Activated naive CD4-positive, alpha-beta T cell treated with anti-CD3 and anti-CD28 coated beads for 36 hours (primary cell): ENCODE measurements at regions of chr1 and their contacts with region 1.

Region 1: GRCh38 chr1:243343970-243344937 is 88.4 kb downstream of the SDCCAG8 start:
- DNase-seq: no peak
- H3K4me3 Mint-ChIP-seq: no peak overlapping the region
- H3K27ac Mint-ChIP-seq: no peak overlapping the region
- H3K4me1 Mint-ChIP-seq: peaks cover 2% of the 10 kb centered on the region
- H3K27me3 Mint-ChIP-seq: no peaks in the 10 kb centered on the region

Region 2: GRCh38 chr1:243413431-243414151 is 69.3 kb after region 1 on chr1:
- CTCF ChIA-PET with region 1: interaction called, 4 read pairs
- intact Hi-C with region 1: loop called (anchors 2 kb)
- DNase-seq: peak; percentile 8
- H3K4me3 Mint-ChIP-seq: no peak overlapping the region
- H3K27ac Mint-ChIP-seq: no peak overlapping the region
- H3K4me1 Mint-ChIP-seq: peaks cover 23% of the 10 kb centered on the region
- H3K27me3 Mint-ChIP-seq: no peaks in the 10 kb centered on the region

Region 3: GRCh38 chr1:243748706-243749283 is 404.5 kb after region 1 on chr1:
- CTCF ChIA-PET with region 1: interaction called, 14 read pairs
- intact Hi-C with region 1: loop called (anchors 1 kb)
- DNase-seq: no peak
- H3K4me3 Mint-ChIP-seq: no peak overlapping the region
- H3K27ac Mint-ChIP-seq: no peak overlapping the region
- H3K4me1 Mint-ChIP-seq: peaks cover 25% of the 10 kb centered on the region
- H3K27me3 Mint-ChIP-seq: no peaks in the 10 kb centered on the region

Region 4: DNA sequence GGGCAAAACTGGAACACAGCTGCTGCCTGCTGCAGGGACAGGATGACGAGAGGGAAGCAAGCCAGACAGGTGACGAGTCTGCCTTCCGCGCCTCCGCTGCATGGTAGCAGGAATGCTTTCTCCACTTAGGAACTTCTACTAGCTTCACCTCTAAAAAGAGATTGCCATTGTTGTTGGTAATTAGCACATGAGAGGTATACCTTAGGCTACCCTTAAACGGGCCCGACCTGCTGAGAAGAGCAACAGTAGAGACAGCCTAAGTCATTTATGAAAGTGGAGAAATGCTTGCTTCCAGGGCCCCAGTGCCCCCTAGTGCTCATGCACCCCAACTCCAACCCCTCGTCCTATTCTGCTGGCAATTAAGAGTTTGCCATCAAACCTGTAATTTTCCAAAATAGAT is 602.7 kb after region 1 on chr1:
- CTCF ChIA-PET with region 1: interaction called, 3 read pairs
- intact Hi-C with region 1: loop called (anchors 1 kb)
- DNase-seq: peak; percentile 59
- H3K4me3 Mint-ChIP-seq: no peak overlapping the region
- H3K27ac Mint-ChIP-seq: no peak overlapping the region
- H3K4me1 Mint-ChIP-seq: no peaks in the 10 kb centered on the region
- H3K27me3 Mint-ChIP-seq: no peaks in the 10 kb centered on the region

Region 5: DNA sequence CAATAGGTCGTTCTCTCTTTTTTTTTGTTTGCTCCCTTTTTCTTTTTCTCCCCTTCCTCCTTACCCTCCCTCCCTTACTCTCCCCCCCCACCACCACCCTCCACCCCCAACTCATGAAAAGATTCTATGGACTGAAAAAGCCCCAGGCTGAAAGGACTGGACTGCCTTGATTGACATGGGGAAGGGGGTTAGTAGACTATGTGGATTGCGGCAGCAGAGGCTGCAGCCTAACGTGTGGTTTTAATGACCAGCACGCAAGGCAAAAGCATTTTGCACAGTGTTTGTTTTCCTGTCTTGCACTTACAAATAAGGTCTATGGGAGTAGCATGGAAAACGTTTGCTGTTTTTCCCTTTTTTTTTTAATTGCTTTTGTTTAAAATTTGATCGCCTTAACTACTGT is 712.3 kb after region 1 on chr1:
- CTCF ChIA-PET with region 1: no interaction called
- intact Hi-C with region 1: loop called (anchors 2 kb)
- DNase-seq: no peak
- H3K4me3 Mint-ChIP-seq: no peak overlapping the region
- H3K27ac Mint-ChIP-seq: no peak overlapping the region
- H3K4me1 Mint-ChIP-seq: peaks cover 10% of the 10 kb centered on the region
- H3K27me3 Mint-ChIP-seq: no peaks in the 10 kb centered on the region

Region 6: GRCh38 chr1:244302889-244303613 is 958.8 kb after region 1 on chr1:
- CTCF ChIA-PET with region 1: interaction called, 3 read pairs
- intact Hi-C with region 1: loop called (anchors 1 kb)
- DNase-seq: no peak
- H3K4me3 Mint-ChIP-seq: no peak overlapping the region
- H3K27ac Mint-ChIP-seq: no peak overlapping the region
- H3K4me1 Mint-ChIP-seq: peaks cover 7% of the 10 kb centered on the region
- H3K27me3 Mint-ChIP-seq: peaks cover 3% of the 10 kb centered on the region